Left cardiac atrium (tissue), 4 donors: ENCODE measurements at regions of chr4 and their contacts with region 1.

Region 1: DNA sequence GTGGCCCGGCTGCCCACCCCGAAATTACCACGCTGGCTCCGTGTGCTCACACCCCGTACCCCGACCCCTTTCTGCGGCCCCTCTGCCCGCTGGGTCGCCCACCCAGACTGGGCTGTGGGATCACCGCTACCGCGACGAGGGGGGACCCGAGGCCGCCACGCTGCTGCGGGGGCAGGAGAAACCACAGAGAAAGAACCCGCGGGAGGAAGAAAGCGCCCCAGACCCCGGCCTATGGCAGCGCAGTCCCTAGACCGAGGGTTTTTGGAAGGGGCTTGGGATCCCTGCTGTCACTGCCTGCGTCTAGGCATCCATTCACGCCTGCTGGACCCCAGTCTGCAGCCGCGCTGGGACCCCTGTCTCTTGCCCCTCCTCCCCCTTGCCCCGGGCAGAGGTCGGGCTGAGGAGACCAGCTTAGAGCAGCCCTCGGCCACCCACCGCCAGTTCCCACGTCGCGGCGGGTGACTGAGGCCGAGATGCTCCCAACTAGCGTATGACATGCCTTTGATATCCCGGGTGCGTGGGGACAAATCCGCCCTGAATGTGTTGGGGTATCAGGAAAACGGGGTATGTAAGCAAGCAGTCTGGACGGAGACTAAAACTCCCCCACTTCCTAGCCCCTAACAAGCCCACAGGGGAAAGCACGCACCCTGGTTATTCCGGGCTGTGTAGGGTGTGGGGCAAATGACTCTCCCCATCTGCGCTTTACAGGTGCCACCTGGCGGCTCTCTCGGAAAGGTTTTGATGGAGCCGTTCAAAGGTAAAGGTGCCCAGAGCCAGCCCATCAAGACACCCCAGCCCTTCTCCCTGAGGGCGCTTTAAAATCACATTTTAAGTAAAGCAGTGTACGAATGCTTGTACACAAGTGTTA is 862 bp upstream of the INPP4B start:
- DNase-seq: peak; percentile 24
- ATAC-seq: peak; percentile 70 to 79

Region 2: GRCh38 chr4:141158219-141158618 is 1688.7 kb before region 1 on chr4:
- intact Hi-C with region 1: loop called in 1 of 2 experiments (anchors 10 kb)
- DNase-seq: no peak
- ATAC-seq: no peak

Region 3: DNA sequence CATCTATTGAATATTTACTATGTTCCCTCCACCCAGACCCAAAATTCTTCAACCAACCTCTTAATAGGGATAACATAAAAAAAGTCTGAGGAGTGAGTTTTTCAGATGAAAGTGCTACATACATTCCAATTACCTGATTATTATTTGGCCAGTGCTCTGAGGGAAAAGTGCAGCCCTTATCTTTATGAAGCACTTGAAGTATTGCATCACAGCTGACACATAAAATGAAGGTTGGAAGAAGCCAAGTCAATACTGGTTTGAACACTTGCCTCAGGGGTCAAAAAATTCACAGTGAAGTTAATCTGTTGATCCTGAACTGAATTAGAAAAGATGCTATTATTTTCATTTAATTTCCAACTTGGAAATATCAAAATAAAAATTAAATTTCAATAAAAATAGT is 499.7 kb before region 1 on chr4:
- intact Hi-C with region 1: loop called in 1 of 2 experiments (anchors 10 kb)
- DNase-seq: no peak
- ATAC-seq: peak in 1 of 2 donors; percentile 69